Transverse colon (tissue), 4 donors: ENCODE measurements at regions of chr3 and their contacts with region 1.

Region 1: DNA sequence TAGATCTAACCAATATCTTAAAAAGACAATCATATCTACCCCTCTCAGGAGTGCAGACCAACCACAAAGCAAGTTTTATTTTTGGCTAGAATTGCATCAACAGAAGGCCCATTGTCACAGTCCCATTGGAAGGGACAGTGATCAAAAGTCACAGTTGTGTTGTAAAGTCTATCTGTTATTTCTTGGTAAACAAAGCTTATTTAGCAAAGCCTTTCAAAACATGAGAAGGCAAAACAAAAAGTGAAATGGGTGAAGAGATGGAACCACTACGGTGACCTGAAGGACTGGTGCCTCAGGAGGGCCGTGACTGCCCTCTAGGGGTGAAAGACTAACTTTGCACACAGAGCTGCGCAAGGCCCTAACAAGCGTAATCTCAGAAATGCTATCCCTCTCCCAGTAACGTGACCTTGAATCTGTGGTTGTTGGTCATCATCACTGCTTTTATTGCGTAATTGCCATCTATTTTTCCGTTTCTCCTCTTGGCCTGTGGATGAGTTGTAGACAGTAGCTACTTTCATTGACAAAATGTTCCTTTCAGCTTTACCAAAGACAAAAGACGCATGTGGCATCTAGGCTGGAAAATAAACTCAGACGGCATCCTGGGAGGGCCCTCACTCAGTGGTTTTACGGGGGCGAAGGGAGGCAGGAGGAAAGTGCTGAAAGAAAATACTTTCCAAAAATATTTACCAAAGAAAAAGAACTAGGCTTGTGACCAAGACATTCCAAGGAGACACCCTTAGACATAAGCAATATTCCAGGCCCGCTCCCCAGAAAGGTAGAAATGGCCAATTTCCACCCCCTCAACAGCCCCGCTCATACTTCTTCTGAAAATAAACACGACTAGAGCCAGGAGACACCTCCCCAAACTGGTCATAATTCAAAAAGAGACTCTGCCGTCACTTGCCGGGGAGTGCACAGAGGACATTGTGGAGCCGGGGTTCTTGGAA is 79.4 kb downstream of the FRMD4B start:
- DNase-seq: peak; percentile 72
- H3K4me3 ChIP-seq: no peak overlapping the region
- H3K27ac ChIP-seq: peak overlapping the region in 2 of 4 donors; percentile 44 to 51
- H3K4me1 ChIP-seq: peaks cover 0 to 13% (median 0%) of the 10 kb centered on the region in 4 donors
- H3K27me3 ChIP-seq: no peaks in the 10 kb centered on the region
- CTCF ChIP-seq: peak; percentile 85 to 93 (median 87)
- EP300 ChIP-seq: no peak
- POLR2A ChIP-seq: no peak

Region 2: DNA sequence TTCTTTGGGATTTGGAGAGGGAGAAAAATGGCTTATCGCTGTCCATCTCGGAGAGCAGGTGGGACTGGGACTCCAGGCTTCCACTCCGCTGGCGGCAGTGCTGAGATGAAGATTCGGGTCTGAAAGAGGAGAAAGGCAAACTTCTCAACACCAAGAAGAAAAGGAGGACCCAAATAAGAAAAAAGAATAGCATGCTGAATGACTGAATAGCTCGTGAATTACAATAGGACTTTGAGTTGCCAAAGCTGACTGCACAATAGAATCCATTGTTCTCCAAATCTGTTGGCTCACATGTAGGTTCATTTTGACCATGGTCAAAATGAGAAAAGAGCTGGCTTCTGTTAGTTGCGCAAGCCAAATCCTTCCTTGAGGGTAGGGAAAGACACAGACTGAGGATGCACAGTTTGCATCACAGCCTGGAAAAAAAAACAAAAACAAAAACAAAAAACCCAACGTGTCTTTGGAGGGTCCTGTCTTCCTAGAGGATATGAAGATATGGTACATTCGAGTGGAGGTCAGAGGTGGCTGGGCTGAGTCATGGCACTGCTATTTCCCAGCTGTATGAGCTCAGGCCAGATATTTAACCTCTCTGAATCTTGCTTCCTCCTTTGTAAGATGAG is 124.8 kb before region 1 on chr3:
- in situ Hi-C with region 1: no loop called
- intact Hi-C with region 1: no loop called
- DNase-seq: peak; percentile 20
- H3K4me3 ChIP-seq: no peak overlapping the region
- H3K27ac ChIP-seq: peak overlapping the region; percentile 70 to 79 (median 76)
- H3K4me1 ChIP-seq: peaks cover 10 to 54% (median 31%) of the 10 kb centered on the region in 4 donors
- H3K27me3 ChIP-seq: no peaks in the 10 kb centered on the region
- CTCF ChIP-seq: no peak
- EP300 ChIP-seq: no peak
- POLR2A ChIP-seq: no peak

Region 3: DNA sequence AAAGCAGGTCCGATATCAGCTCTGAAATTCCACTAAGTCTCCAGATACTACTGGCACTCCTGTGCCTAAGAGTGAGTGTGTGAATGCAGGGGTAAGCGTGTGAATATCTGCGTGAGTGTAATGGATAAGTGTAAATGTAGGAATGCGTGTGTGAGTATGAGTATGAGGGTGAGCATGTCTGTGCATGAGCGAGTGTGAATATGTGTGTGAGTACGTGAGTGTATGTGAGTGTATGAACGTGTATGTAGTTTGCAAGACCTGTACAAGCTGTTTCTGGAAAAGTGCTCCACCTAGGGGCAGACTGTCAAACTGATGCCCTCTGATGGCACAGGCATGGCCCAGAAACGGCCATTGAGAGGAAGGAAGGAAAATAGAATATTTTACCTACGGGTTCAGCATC is 103.7 kb after region 1 on chr3:
- in situ Hi-C with region 1: loop called in 1 of 4 experiments (anchors 25 kb)
- intact Hi-C with region 1: no loop called
- DNase-seq: peak; percentile 80
- H3K4me3 ChIP-seq: no peak overlapping the region
- H3K27ac ChIP-seq: peak overlapping the region in 1 of 4 donors; percentile 41
- H3K4me1 ChIP-seq: no peaks in the 10 kb centered on the region
- H3K27me3 ChIP-seq: no peaks in the 10 kb centered on the region
- CTCF ChIP-seq: peak; percentile 72 to 81 (median 79)
- EP300 ChIP-seq: no peak
- POLR2A ChIP-seq: no peak

Region 4: DNA sequence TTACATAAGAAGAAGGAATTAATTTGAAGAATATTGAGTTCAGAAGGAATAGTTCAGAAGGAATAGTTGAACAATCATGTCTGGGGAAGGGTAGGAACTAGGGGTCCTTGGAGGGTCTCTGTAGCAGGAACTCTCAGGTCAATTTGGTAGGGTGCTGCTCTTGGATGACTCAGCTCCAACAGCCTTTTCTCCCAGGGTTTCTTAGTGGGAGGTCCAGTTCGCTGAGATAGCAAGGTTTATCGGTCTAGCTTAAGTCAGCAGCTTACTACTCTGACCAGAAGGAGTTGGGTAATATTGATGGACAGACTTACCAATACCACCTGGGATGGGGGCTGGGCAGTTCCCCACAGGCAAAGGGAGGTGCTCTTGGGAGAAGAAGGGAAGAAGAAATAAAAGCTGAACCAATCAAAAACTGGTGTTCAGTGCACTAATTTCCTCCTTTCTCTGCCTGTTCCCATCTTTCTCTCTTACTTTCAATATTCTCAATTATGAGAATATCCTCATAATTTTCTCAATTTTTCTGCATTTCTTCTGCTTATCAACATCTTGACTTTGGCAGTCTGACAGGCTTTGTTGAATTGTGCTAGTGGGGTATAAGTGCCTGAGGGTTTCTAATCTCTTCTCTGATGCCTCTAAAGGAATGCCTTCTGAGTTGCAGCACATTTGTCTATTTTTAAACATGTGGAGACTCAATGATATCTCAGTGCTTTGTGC is 418.4 kb after region 1 on chr3:
- in situ Hi-C with region 1: no loop called
- intact Hi-C with region 1: no loop called
- DNase-seq: no peak
- H3K4me3 ChIP-seq: no peak overlapping the region
- H3K27ac ChIP-seq: no peak overlapping the region
- H3K4me1 ChIP-seq: no peaks in the 10 kb centered on the region
- H3K27me3 ChIP-seq: no peaks in the 10 kb centered on the region
- CTCF ChIP-seq: no peak
- EP300 ChIP-seq: no peak
- POLR2A ChIP-seq: no peak